Naive thymus-derived CD4-positive, alpha-beta T cell (primary cell): ENCODE measurements at regions of chr6 and their contacts with region 1.

Region 1: GRCh38 chr6:33904050-33904746 is 100.4 kb upstream of the MLN start:
- DNase-seq: peak; percentile 36 to 83 (median 75)
- ATAC-seq: peak; percentile 85
- H3K4me3 ChIP-seq: peak overlapping the region; percentile 28
- H3K4me3 Mint-ChIP-seq: peak overlapping the region; percentile 67 to 85 (median 82)
- H3K27ac ChIP-seq: peak overlapping the region; percentile 77
- H3K27ac Mint-ChIP-seq: peak overlapping the region; percentile 84 to 97 (median 95)
- H3K4me1 ChIP-seq: peaks cover 55 to 66% of the 10 kb centered on the region in 2 donors
- H3K4me1 Mint-ChIP-seq: peaks cover 54 to 88% (median 80%) of the 10 kb centered on the region in 7 donors
- H3K27me3 ChIP-seq: no peaks in the 10 kb centered on the region
- H3K27me3 Mint-ChIP-seq: peaks cover 0 to 2% (median 0%) of the 10 kb centered on the region in 5 donors

Region 2: DNA sequence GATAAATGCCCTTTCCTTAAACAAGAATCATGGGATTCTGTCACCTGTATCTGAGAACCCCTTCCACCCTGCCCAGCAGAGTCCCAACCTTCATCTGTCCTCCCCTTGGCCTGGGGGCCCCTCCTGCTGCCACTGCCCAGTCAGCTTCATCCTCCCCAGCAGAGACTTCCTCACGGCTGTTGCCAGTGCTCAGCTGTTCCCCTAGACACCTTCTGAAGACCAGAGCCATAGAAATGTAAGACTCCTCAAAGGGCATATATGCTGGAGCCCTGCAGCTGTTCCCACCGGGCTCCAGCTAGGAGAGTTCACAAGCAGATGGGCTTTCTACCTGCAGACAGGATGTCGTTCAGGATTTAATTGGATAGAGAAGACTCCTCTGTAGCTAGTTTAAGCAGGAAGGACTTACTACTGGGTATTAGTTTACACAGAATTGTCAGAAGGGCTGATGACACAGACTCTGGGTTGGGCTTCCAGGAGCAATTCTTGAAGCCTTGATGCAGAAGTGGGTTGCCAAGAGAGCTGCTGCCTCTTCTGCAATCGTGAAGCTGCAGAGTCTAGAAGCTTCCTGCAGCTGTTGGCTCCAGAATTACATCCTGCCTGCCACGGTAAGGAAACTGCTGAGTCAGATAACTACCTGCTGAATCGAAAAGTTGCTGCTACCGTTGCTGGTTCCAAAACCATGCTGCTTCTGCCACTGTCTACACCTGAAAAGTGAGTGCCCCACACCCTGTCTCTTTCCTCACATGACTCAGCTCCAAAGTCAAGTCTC is 43.3 kb before region 1 on chr6:
- CTCF ChIA-PET with region 1: interaction called, 4 read pairs
- POLR2A ChIA-PET with region 1: interaction called, 9 read pairs
- intact Hi-C with region 1: loop called (anchors 1 kb)
- DNase-seq: peak in 7 of 9 donors; percentile 20 to 68 (median 54)
- ATAC-seq: peak; percentile 30
- H3K4me3 ChIP-seq: no peak overlapping the region
- H3K4me3 Mint-ChIP-seq: peak overlapping the region in 9 of 10 donors; percentile 19 to 63 (median 40)
- H3K27ac ChIP-seq: no peak overlapping the region
- H3K27ac Mint-ChIP-seq: peak overlapping the region in 5 of 9 donors; percentile 12 to 82 (median 35)
- H3K4me1 ChIP-seq: peaks cover 44 to 54% of the 10 kb centered on the region in 2 donors
- H3K4me1 Mint-ChIP-seq: peaks cover 31 to 67% (median 57%) of the 10 kb centered on the region in 7 donors
- H3K27me3 ChIP-seq: no peaks in the 10 kb centered on the region
- H3K27me3 Mint-ChIP-seq: peaks cover 0 to 11% (median 9%) of the 10 kb centered on the region in 5 donors

Region 3: DNA sequence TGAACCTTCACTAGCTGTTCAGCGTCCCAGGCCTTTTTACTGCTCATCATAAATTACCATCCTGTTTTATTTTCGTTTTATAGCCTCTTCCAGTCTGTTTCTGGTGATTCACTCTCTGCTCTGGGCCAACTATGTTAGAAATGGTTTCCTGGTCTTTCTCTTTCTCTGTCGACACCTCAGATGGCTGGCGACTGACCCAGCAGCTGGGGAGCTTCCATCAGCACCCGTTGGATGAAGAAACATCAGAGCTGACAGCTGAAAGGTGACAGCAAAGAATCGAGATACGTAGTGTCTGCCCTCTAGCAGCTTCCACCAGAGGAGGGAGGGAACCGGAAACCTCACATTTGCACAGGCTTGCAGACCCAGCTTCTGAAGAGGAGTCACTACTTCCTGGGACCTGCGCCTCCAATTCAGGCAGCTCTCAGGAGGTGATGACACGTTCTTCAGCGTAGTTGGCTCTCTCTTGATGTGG is 17.5 kb before region 1 on chr6:
- CTCF ChIA-PET with region 1: no interaction called
- POLR2A ChIA-PET with region 1: interaction called, 5 read pairs
- intact Hi-C with region 1: loop called (anchors 2 kb)
- DNase-seq: peak in 4 of 9 donors; percentile 27 to 38 (median 28)
- ATAC-seq: peak; percentile 32
- H3K4me3 ChIP-seq: no peak overlapping the region
- H3K4me3 Mint-ChIP-seq: peak overlapping the region in 3 of 10 donors; percentile 9 to 42 (median 10)
- H3K27ac ChIP-seq: no peak overlapping the region
- H3K27ac Mint-ChIP-seq: peak overlapping the region; percentile 13 to 87 (median 59)
- H3K4me1 ChIP-seq: peaks cover 0 to 7% of the 10 kb centered on the region in 2 donors
- H3K4me1 Mint-ChIP-seq: peaks cover 0 to 19% (median 18%) of the 10 kb centered on the region in 7 donors
- H3K27me3 ChIP-seq: no peaks in the 10 kb centered on the region
- H3K27me3 Mint-ChIP-seq: peaks cover 0 to 42% (median 0%) of the 10 kb centered on the region in 5 donors

Region 4: DNA sequence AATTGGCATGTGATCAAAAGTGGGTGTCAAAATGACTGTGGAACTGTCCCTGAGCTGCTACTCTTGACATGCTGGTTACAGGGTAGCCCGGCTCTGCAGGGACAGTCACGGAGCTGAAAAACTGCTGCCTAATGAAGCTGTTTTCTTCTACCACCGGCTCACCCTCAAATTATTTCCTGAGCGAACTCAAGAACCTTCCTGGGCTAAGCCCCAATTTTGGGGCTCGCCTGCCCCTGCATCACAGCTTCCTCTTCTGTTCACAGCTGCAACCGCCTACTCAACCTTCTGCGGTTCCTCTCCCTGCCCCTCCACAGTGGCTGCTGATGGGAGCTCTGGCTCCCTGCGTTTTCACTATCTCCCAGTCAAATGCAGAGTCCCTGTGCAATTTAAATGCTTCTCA is 10.4 kb after region 1 on chr6:
- CTCF ChIA-PET with region 1: interaction called, 8 read pairs
- POLR2A ChIA-PET with region 1: interaction called, 6 read pairs
- intact Hi-C with region 1: loop called (anchors 1 kb)
- DNase-seq: peak in 8 of 9 donors; percentile 26 to 57 (median 49)
- ATAC-seq: peak; percentile 79
- H3K4me3 ChIP-seq: peak overlapping the region; percentile 3
- H3K4me3 Mint-ChIP-seq: peak overlapping the region; percentile 61 to 84 (median 77)
- H3K27ac ChIP-seq: peak overlapping the region; percentile 5
- H3K27ac Mint-ChIP-seq: peak overlapping the region; percentile 33 to 90 (median 79)
- H3K4me1 ChIP-seq: peaks cover 32 to 41% of the 10 kb centered on the region in 2 donors
- H3K4me1 Mint-ChIP-seq: peaks cover 29 to 62% (median 54%) of the 10 kb centered on the region in 7 donors
- H3K27me3 ChIP-seq: no peaks in the 10 kb centered on the region
- H3K27me3 Mint-ChIP-seq: peaks cover 0 to 5% (median 0%) of the 10 kb centered on the region in 5 donors

Region 5: GRCh38 chr6:34027445-34027936 is 123.3 kb after region 1 on chr6:
- CTCF ChIA-PET with region 1: interaction called, 3 read pairs
- POLR2A ChIA-PET with region 1: no interaction called
- intact Hi-C with region 1: loop called in 1 of 2 experiments (anchors 10 kb)
- DNase-seq: peak; percentile 36 to 78 (median 64)
- ATAC-seq: peak; percentile 66
- H3K4me3 ChIP-seq: no peak overlapping the region
- H3K4me3 Mint-ChIP-seq: no peak overlapping the region
- H3K27ac ChIP-seq: no peak overlapping the region
- H3K27ac Mint-ChIP-seq: no peak overlapping the region
- H3K4me1 ChIP-seq: no peaks in the 10 kb centered on the region
- H3K4me1 Mint-ChIP-seq: peaks cover 0 to 4% (median 0%) of the 10 kb centered on the region in 7 donors
- H3K27me3 ChIP-seq: no peaks in the 10 kb centered on the region
- H3K27me3 Mint-ChIP-seq: peaks cover 0 to 4% (median 0%) of the 10 kb centered on the region in 5 donors